Panc1 (cell line): ENCODE measurements at regions of chr1 and their contacts with region 1.

Region 1: GRCh38 chr1:28070725-28071593 is 17.5 kb downstream of the EYA3 start:
- DNase-seq: no peak
- ATAC-seq: no peak
- H3K4me3 ChIP-seq: no peak overlapping the region
- H3K27ac ChIP-seq: no peak overlapping the region
- H3K4me1 ChIP-seq: peaks cover 25% of the 10 kb centered on the region; the same call in 1 of the 2 replicates
- H3K27me3 ChIP-seq: no peaks in the 10 kb centered on the region
- CTCF ChIP-seq: no peak

Region 2: GRCh38 chr1:28235755-28236655 is 165.0 kb after region 1 on chr1 and contains the start of gene ATP5IF1:
- CTCF ChIA-PET with region 1: no interaction called
- POLR2A ChIA-PET with region 1: interaction called, 10 read pairs
- in situ Hi-C with region 1: no loop called
- intact Hi-C with region 1: no loop called
- DNase-seq: peak; percentile 96
- ATAC-seq: peak; percentile 95
- H3K4me3 ChIP-seq: peak within 1 kb of the TSS; percentile 92 to 94
- H3K27ac ChIP-seq: peak within 1 kb of the TSS; percentile 91
- H3K4me1 ChIP-seq: peaks cover 8% of the 10 kb centered on the region
- H3K27me3 ChIP-seq: no peaks in the 10 kb centered on the region
- CTCF ChIP-seq: no peak
- total RNA-seq, gene ATP5IF1: 94.5 TPM

Region 3: GRCh38 chr1:28537457-28538199 is 466.7 kb after region 1 on chr1:
- CTCF ChIA-PET with region 1: no interaction called
- POLR2A ChIA-PET with region 1: no interaction called
- in situ Hi-C with region 1: no loop called
- intact Hi-C with region 1: no loop called
- DNase-seq: no peak
- ATAC-seq: no peak
- H3K4me3 ChIP-seq: no peak overlapping the region
- H3K27ac ChIP-seq: no peak overlapping the region
- H3K4me1 ChIP-seq: no peaks in the 10 kb centered on the region
- H3K27me3 ChIP-seq: no peaks in the 10 kb centered on the region
- CTCF ChIP-seq: no peak